PC-9 (cell line): ENCODE measurements at regions of chrX and their contacts with region 1.

Region 1: GRCh38 chrX:119871599-119872395 is at the starts of genes NDUFA1 and RNF113A:
- DNase-seq: peak; percentile 86 to 89
- H3K4me3 ChIP-seq: peak within 1 kb of the TSS; percentile 77
- H3K27ac ChIP-seq: peak within 1 kb of the TSS; percentile 97
- H3K4me1 ChIP-seq: peaks cover 21% of the 10 kb centered on the region
- H3K27me3 ChIP-seq: no peaks in the 10 kb centered on the region
- CTCF ChIP-seq: no peak
- total RNA-seq, gene NDUFA1: 181 and 189 TPM in 2 replicates
- total RNA-seq, gene RNF113A: 23.2 and 24.2 TPM in 2 replicates

Region 2: GRCh38 chrX:119118780-119119395 is 752.9 kb before region 1 on chrX:
- CTCF ChIA-PET with region 1: no interaction called
- POLR2A ChIA-PET with region 1: no interaction called
- intact Hi-C with region 1: no loop called
- DNase-seq: peak; percentile 50 to 57
- H3K4me3 ChIP-seq: no peak overlapping the region
- H3K27ac ChIP-seq: no peak overlapping the region
- H3K4me1 ChIP-seq: no peaks in the 10 kb centered on the region
- H3K27me3 ChIP-seq: peaks cover 22% of the 10 kb centered on the region
- CTCF ChIP-seq: peak; percentile 97

Region 3: GRCh38 chrX:119482481-119483480 is 389.0 kb before region 1 on chrX:
- CTCF ChIA-PET with region 1: no interaction called
- POLR2A ChIA-PET with region 1: no interaction called
- intact Hi-C with region 1: loop called (anchors 5 kb)
- DNase-seq: peak; percentile 70 to 78
- H3K4me3 ChIP-seq: peak overlapping the region; percentile 57; the same call in 1 of the 2 replicates
- H3K27ac ChIP-seq: 0 out of 2 replicates have a peak overlapping the region, but pooled peaks have one; percentile 37
- H3K4me1 ChIP-seq: peaks cover 16% of the 10 kb centered on the region
- H3K27me3 ChIP-seq: no peaks in the 10 kb centered on the region
- CTCF ChIP-seq: peak; percentile 81

Region 4: GRCh38 chrX:119757979-119758730 is 113.6 kb before region 1 on chrX and contains the start of gene SOWAHD:
- CTCF ChIA-PET with region 1: no interaction called
- POLR2A ChIA-PET with region 1: no interaction called
- intact Hi-C with region 1: no loop called
- DNase-seq: peak; percentile 47 to 78
- H3K4me3 ChIP-seq: peak within 1 kb of the TSS; percentile 62
- H3K27ac ChIP-seq: no peak within 1 kb of the TSS
- H3K4me1 ChIP-seq: peaks cover 15% of the 10 kb centered on the region
- H3K27me3 ChIP-seq: no peaks in the 10 kb centered on the region
- CTCF ChIP-seq: no peak
- total RNA-seq, gene SOWAHD: 1.4 and 2.8 TPM in 2 replicates

Region 5: DNA sequence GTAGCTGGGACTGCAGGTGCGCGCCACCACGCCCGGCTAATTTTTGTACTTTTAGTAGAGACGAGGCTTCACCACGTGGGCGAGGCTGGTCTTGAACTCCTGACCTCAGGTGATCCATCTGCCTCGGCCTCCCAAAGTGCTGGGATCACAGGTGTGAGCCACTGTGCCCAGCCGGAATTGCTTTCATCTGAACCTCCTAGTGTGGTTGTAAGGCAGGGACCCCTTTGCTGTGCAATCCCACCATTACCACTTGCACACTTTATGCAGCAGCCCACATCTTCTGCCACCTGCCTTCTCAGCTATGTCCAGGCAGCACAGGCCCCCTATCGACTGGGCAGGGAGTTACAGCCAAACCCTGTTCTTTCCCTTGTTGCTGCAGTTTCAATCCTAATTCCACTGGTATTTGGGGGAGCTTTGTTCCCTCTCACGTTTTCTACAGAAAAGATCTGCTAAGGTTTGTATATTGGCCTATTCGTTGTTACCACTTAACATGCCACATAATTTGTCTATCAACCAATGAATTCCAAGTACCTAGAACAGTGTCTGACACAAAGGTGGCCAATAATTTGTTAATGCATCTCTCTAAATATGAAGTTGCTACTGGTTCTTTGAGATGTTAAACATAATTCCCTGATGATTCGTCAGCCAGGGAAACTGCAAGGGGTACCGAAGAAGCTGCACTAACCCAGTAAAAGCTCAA is 86.9 kb before region 1 on chrX:
- CTCF ChIA-PET with region 1: no interaction called
- POLR2A ChIA-PET with region 1: interaction called, 21 read pairs
- intact Hi-C with region 1: loop called (anchors 2 kb)
- DNase-seq: peak; percentile 31 to 58
- H3K4me3 ChIP-seq: peak overlapping the region; percentile 7; the same call in 1 of the 2 replicates
- H3K27ac ChIP-seq: no peak overlapping the region
- H3K4me1 ChIP-seq: peaks cover 26% of the 10 kb centered on the region
- H3K27me3 ChIP-seq: no peaks in the 10 kb centered on the region
- CTCF ChIP-seq: peak; percentile 77

Region 6: GRCh38 chrX:119791438-119792231 is 80.2 kb before region 1 on chrX and contains the start of gene RPL39:
- CTCF ChIA-PET with region 1: no interaction called
- POLR2A ChIA-PET with region 1: interaction called, 19 read pairs
- intact Hi-C with region 1: loop called (anchors 2 kb)
- DNase-seq: peak; percentile 84 to 86
- H3K4me3 ChIP-seq: peak within 1 kb of the TSS; percentile 96
- H3K27ac ChIP-seq: peak within 1 kb of the TSS; percentile 94
- H3K4me1 ChIP-seq: peaks cover 34% of the 10 kb centered on the region
- H3K27me3 ChIP-seq: no peaks in the 10 kb centered on the region
- CTCF ChIP-seq: no peak
- total RNA-seq, gene RPL39: 3,176 and 3,660 TPM in 2 replicates

Region 7: GRCh38 chrX:119852382-119853353 is 19.1 kb before region 1 on chrX and contains the start of gene UPF3B:
- CTCF ChIA-PET with region 1: interaction called, 3 read pairs
- POLR2A ChIA-PET with region 1: interaction called, 5 read pairs
- intact Hi-C with region 1: loop called (anchors 1 kb)
- DNase-seq: peak; percentile 98 to 99
- H3K4me3 ChIP-seq: peak within 1 kb of the TSS; percentile 89
- H3K27ac ChIP-seq: peak within 1 kb of the TSS; percentile 62
- H3K4me1 ChIP-seq: no peaks in the 10 kb centered on the region
- H3K27me3 ChIP-seq: no peaks in the 10 kb centered on the region
- CTCF ChIP-seq: no peak
- total RNA-seq, gene UPF3B: 19.8 and 24.3 TPM in 2 replicates

Region 8: DNA sequence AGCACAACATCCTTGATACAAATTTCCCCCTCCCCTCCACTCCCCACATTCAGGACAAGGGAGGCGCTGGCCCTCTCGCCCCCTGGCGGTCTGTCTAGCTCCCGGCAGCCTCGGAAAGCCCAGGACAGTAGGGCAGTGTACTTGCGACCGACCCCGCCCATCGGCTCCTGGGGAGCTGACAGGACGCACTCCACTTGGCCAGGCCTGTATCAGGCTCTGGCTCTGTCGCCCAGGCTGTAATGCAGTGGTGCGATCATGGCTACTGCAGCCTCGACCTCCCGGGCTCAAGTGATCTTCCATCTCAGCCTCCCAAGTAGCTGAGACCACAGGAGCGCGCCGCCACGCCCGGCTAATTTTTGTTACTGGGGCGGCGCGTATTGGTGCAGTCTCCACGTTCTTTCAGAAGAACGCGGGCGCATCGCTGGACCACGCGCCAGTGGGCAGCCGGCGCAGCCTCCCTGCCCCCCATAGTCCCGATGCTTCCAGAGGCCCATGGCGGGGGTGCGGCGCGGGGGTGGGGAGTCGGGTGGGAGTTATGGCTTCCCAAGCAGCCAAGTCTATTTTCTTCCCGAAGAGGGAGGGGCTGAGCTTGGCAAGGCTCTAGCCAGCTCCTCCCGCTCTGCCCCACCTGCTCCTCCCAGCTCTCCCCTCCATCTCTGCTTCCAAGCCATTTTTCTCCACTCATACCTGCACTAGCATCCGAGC is 16.1 kb after region 1 on chrX:
- CTCF ChIA-PET with region 1: no interaction called
- POLR2A ChIA-PET with region 1: no interaction called
- intact Hi-C with region 1: loop called (anchors 2 kb)
- DNase-seq: peak; percentile 65 to 77
- H3K4me3 ChIP-seq: peak overlapping the region; percentile 66
- H3K27ac ChIP-seq: no peak overlapping the region
- H3K4me1 ChIP-seq: no peaks in the 10 kb centered on the region
- H3K27me3 ChIP-seq: no peaks in the 10 kb centered on the region
- CTCF ChIP-seq: peak; percentile 83